GM12878 (cell line): ENCODE measurements at regions of chr22 and their contacts with region 1.

Region 1: GRCh38 chr22:43129426-43130425 is 13.5 kb downstream of the MCAT start:
- DNase-seq: no peak
- ATAC-seq: no peak
- H3K4me3 ChIP-seq: no peak overlapping the region
- H3K27ac ChIP-seq: no peak overlapping the region
- H3K4me1 ChIP-seq: peaks cover 31% of the 10 kb centered on the region
- H3K27me3 ChIP-seq: no peaks in the 10 kb centered on the region
- CTCF ChIP-seq: no peak
- EP300 ChIP-seq: no peak
- POLR2A ChIP-seq: no peak
- RAD21 ChIP-seq: no peak

Region 2: DNA sequence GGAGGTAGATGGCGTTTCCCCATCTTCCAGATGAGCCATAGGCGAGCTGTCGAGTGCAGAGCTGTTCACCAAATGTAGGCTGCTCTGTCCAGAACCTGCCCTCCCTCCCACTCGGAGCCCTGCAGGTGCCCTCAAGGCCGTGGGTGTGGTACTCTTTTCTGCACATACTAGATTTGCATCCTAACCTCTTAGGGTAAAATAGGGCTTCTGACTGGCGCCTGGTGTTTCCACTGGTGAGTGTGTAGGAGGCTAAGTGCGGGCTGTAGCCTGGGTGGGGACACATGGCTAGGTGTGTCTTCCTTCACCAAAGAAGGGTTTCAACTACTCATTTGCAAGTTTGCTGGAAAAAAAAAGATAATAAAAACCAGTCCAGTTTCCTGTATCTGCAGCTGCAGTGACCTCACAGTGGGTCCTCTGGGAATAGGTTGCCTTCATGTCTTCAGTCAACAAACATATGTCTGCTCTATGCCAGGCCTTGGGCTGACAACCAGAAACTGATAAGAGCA is 10.7 kb before region 1 on chr22:
- CTCF ChIA-PET with region 1: interaction called, 3 read pairs
- POLR2A ChIA-PET with region 1: interaction called, 14 read pairs
- RAD21 ChIA-PET with region 1: no interaction called
- SMC1A ChIA-PET with region 1: interaction called, 3 read pairs
- in situ Hi-C with region 1: no loop called
- intact Hi-C with region 1: no loop called
- DNase-seq: peak; percentile 58
- ATAC-seq: peak; percentile 77
- H3K4me3 ChIP-seq: no peak overlapping the region
- H3K27ac ChIP-seq: no peak overlapping the region
- H3K4me1 ChIP-seq: peaks cover 41% of the 10 kb centered on the region
- H3K27me3 ChIP-seq: peaks cover 0 to 3% of the 10 kb centered on the region in 2 experiments; a peak in 1 of 4 replicates
- CTCF ChIP-seq: no peak
- EP300 ChIP-seq: 0 out of 4 replicates have a peak, but pooled peaks of 1 of the 2 experiments have one; percentile 17
- POLR2A ChIP-seq: no peak
- RAD21 ChIP-seq: no peak

Region 3: GRCh38 chr22:43168416-43169309 is 38.9 kb after region 1 on chr22:
- CTCF ChIA-PET with region 1: no interaction called
- POLR2A ChIA-PET with region 1: no interaction called
- RAD21 ChIA-PET with region 1: no interaction called
- SMC1A ChIA-PET with region 1: no interaction called
- in situ Hi-C with region 1: no loop called
- intact Hi-C with region 1: no loop called
- DNase-seq: no peak
- ATAC-seq: no peak
- H3K4me3 ChIP-seq: no peak overlapping the region
- H3K27ac ChIP-seq: no peak overlapping the region
- H3K4me1 ChIP-seq: no peaks in the 10 kb centered on the region
- H3K27me3 ChIP-seq: no peaks in the 10 kb centered on the region
- CTCF ChIP-seq: no peak
- EP300 ChIP-seq: no peak
- POLR2A ChIP-seq: no peak
- RAD21 ChIP-seq: no peak

Region 4: GRCh38 chr22:43293655-43294392 is 164.1 kb after region 1 on chr22:
- CTCF ChIA-PET with region 1: no interaction called
- POLR2A ChIA-PET with region 1: no interaction called
- RAD21 ChIA-PET with region 1: no interaction called
- SMC1A ChIA-PET with region 1: no interaction called
- in situ Hi-C with region 1: no loop called
- intact Hi-C with region 1: no loop called
- DNase-seq: no peak
- ATAC-seq: no peak
- H3K4me3 ChIP-seq: no peak overlapping the region
- H3K27ac ChIP-seq: no peak overlapping the region
- H3K4me1 ChIP-seq: no peaks in the 10 kb centered on the region
- H3K27me3 ChIP-seq: peaks cover 6 to 9% of the 10 kb centered on the region in 2 experiments; a peak in 3 of 4 replicates
- CTCF ChIP-seq: no peak
- EP300 ChIP-seq: no peak
- POLR2A ChIP-seq: no peak
- RAD21 ChIP-seq: no peak